ENCODE measurements at regions of chr5 and their contacts with region 1.

Region 1: DNA sequence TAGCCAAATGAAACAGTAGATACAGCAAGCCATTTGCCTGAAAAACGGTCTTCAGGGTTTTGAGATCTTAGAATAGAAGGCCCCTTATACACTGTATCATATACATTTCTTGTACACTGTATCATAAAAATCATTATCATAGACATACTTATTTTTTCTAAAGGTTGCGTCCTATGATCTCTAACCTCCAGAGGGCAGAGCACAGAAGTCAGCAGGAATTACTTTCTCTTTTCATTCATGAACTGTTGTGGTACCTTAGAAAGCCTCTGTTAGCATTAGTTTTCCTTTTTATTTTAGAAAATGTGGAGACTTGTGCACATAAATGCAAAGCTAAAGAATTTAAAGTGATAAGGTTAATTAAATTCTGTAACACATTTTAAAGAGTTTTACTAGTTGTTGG is 115.4 kb downstream of the OXCT1 start:
- DNase-seq: no peak
- ATAC-seq: peak in 1 of 2 experiments; percentile 53; a peak in 1 of 6 replicates
- H3K4me3 ChIP-seq: no peak overlapping the region
- H3K27ac ChIP-seq: no peak overlapping the region
- H3K4me1 ChIP-seq: no peaks in the 10 kb centered on the region
- CTCF ChIP-seq: peak; percentile 39; the same call in 2 of the 3 replicates
- EP300 ChIP-seq: no peak
- POLR2A ChIP-seq: no peak
- RAD21 ChIP-seq: peak; percentile 24 to 27; a peak in 2 of 5 replicates

Region 2: DNA sequence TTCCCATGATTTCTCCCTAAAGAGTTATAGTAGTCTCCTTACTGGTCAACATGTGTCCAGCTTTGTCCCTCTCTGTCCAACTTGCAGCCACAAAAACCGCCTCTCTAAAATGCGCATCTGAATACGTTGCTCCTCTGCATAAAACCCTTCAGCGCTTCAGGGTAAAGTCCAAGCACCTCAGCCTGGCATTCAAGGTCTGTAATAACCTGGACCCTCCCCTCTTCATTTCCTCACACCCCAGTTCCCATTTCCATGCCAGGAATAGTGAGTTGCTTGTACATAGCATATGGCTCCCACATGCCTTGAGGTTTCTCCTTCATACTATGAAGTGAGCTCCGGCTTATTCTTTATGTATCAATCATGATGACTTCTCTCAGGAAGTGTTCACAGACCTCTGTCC is 13.8 kb after region 1 on chr5:
- CTCF ChIA-PET with region 1: interaction called, 10 read pairs
- POLR2A ChIA-PET with region 1: no interaction called
- DNase-seq: no peak
- ATAC-seq: no peak
- H3K4me3 ChIP-seq: no peak overlapping the region
- H3K27ac ChIP-seq: no peak overlapping the region
- H3K4me1 ChIP-seq: no peaks in the 10 kb centered on the region
- CTCF ChIP-seq: no peak
- EP300 ChIP-seq: no peak
- POLR2A ChIP-seq: no peak
- RAD21 ChIP-seq: no peak

Measured in A549 (cell line).